B cell (primary cell): ENCODE measurements at regions of chr11 and their contacts with region 1.

Region 1: DNA sequence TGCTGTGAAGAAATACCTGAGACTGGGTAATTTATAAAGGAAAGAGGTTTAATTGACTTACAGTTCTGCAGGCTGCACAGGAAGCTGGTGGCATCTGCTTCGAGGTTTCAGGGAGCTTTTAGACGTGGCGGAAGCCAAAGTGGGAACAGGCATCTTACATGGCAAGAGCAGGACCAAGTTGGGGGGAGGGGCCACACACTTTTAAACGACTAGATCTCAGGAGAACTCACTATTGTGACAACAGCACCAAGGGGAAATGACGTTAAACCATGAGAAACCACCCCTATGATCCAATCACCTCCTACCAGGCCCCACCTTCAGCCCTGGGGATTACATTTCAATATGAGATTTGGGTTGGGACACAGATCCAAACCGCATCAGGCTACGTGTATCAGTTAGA is 11.1 kb upstream of the SCGB1D4 start:
- DNase-seq: no peak
- ATAC-seq: no peak
- H3K4me3 ChIP-seq: no peak overlapping the region
- H3K4me3 Mint-ChIP-seq: no peak overlapping the region
- H3K27ac ChIP-seq: no peak overlapping the region
- H3K27ac Mint-ChIP-seq: no peak overlapping the region
- H3K4me1 ChIP-seq: peaks cover 8 to 12% of the 10 kb centered on the region in 2 donors
- H3K4me1 Mint-ChIP-seq: peaks cover 11% of the 10 kb centered on the region
- H3K27me3 ChIP-seq: peaks cover 0 to 39% (median 10%) of the 10 kb centered on the region in 4 experiments
- H3K27me3 Mint-ChIP-seq: peaks cover 45% of the 10 kb centered on the region
- CTCF ChIP-seq: no peak

Region 2: DNA sequence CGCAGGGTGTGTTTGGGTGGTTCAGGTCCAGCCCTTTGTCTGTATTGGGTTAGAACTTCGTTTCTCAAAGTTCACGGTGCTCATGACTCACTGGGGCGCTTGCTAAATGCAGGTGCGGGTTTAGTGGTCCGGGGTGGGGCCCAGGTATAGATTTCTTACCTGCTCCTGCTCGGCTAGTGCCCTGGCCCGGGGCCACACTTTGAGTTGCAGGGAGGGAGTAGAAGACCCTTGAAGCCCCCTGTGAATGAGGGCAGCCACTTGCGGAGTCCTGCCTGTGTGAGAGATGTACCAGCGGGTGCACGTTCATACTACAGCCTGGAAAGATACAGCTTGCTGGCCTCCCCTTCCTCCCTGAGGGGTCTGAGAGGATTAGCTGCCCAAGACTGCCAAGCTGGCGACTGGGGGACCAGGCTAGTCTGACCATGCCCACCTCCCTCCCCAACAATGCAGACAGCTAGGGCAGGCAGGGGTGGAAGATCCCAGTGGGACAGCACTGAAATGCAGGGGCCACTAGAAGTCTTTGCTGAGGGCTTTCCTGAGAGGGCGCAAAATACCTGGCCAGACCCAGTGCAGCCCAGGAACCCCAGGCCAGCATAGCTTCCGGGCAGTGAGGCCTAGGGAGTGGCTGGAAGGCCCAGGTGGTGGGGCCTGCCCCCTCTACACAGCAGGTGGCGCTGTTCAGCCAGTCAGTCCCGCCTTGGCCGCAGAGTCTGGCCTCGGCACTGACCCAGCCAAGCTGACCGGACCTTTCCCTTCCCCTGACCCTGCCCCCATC is 562.6 kb before region 1 on chr11:
- CTCF ChIA-PET with region 1: interaction called, 4 read pairs
- POLR2A ChIA-PET with region 1: no interaction called
- intact Hi-C with region 1: loop called (anchors 5 kb)
- DNase-seq: peak; percentile 60
- ATAC-seq: peak; percentile 48
- H3K4me3 ChIP-seq: no peak overlapping the region
- H3K4me3 Mint-ChIP-seq: no peak overlapping the region
- H3K27ac ChIP-seq: no peak overlapping the region
- H3K27ac Mint-ChIP-seq: no peak overlapping the region
- H3K4me1 ChIP-seq: peaks cover 4 to 5% of the 10 kb centered on the region in 2 donors
- H3K4me1 Mint-ChIP-seq: peaks cover 2% of the 10 kb centered on the region
- H3K27me3 ChIP-seq: peaks cover 0 to 35% (median 13%) of the 10 kb centered on the region in 4 experiments
- H3K27me3 Mint-ChIP-seq: peaks cover 21% of the 10 kb centered on the region
- CTCF ChIP-seq: peak; percentile 76

Region 3: DNA sequence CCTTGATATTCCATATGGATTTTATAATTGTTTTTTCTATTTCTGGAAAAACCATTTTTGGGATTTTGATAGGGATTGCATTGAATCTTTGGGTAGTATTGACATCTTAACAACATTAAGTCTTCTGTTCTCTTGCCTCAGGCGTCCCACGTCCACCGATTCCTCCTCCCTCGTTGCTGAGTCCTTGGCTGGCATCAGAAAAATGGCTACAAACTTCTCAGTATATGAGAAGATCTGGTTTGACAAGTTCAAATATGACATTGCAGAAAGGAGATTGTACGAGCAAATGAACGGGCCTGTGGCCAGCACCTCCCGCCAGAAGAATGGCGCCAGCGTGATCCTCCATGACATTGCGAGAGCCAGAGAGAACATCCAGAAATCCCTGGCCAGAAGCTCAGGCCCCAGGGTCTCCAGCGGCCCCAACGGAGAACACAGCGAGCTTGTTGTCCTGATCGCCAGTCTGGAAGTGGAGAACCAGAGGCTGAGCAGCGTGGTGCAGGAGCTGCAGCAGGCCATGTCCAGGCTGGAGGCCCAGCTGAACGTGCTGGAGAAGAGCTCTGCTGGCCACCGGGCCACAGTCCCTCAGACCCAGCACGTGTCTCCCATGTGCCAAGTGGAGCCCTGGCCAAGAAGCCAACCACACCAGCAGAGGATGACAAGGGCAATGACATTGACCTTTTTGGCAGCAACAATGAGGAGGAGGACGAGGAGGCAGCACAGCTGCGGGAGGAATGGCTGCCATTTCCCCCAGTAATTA is 140.7 kb before region 1 on chr11:
- CTCF ChIA-PET with region 1: interaction called, 15 read pairs
- POLR2A ChIA-PET with region 1: no interaction called
- intact Hi-C with region 1: no loop called
- DNase-seq: no peak
- ATAC-seq: no peak
- H3K4me3 ChIP-seq: no peak overlapping the region
- H3K4me3 Mint-ChIP-seq: no peak overlapping the region
- H3K27ac ChIP-seq: no peak overlapping the region
- H3K27ac Mint-ChIP-seq: no peak overlapping the region
- H3K4me1 ChIP-seq: peaks cover 0 to 3% of the 10 kb centered on the region in 2 donors
- H3K4me1 Mint-ChIP-seq: peaks cover 5% of the 10 kb centered on the region
- H3K27me3 ChIP-seq: peaks cover 0 to 22% (median 8%) of the 10 kb centered on the region in 4 experiments
- H3K27me3 Mint-ChIP-seq: peaks cover 63% of the 10 kb centered on the region
- CTCF ChIP-seq: no peak

Region 4: DNA sequence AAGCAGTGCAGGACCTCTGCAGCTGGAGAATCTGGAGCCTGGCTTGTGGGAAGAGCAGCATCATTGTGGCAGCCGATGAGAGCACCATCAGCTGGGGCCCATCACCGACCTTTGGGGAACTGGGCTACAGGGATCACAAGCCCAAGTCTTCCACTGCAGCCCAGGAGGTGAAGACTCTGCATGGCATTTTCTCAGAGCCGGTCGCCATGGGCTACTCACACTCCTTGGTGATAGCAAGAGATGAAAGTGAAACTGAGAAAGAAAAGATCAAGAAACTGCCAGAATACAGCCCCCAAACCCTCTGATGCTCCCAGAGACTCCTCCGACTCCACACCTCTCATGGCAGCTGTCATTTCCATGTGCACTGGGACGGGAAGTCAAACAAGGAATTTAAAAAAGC is 62.9 kb after region 1 on chr11:
- CTCF ChIA-PET with region 1: no interaction called
- POLR2A ChIA-PET with region 1: no interaction called
- intact Hi-C with region 1: loop called (anchors 2 kb)
- DNase-seq: no peak
- ATAC-seq: no peak
- H3K4me3 ChIP-seq: no peak overlapping the region
- H3K4me3 Mint-ChIP-seq: no peak overlapping the region
- H3K27ac ChIP-seq: no peak overlapping the region
- H3K27ac Mint-ChIP-seq: no peak overlapping the region
- H3K4me1 ChIP-seq: peaks cover 0 to 2% of the 10 kb centered on the region in 2 donors
- H3K4me1 Mint-ChIP-seq: no peaks in the 10 kb centered on the region
- H3K27me3 ChIP-seq: no peaks in the 10 kb centered on the region
- H3K27me3 Mint-ChIP-seq: no peaks in the 10 kb centered on the region
- CTCF ChIP-seq: no peak

Region 5: GRCh38 chr11:62601394-62602140 is 291.6 kb after region 1 on chr11 and contains the start of gene MTA2:
- CTCF ChIA-PET with region 1: no interaction called
- POLR2A ChIA-PET with region 1: no interaction called
- intact Hi-C with region 1: no loop called
- DNase-seq: peak; percentile 99
- ATAC-seq: peak; percentile 78
- H3K4me3 ChIP-seq: peak within 1 kb of the TSS; percentile 82 to 97 (median 86)
- H3K4me3 Mint-ChIP-seq: peak within 1 kb of the TSS; percentile 97
- H3K27ac ChIP-seq: peak within 1 kb of the TSS; percentile 78 to 90
- H3K27ac Mint-ChIP-seq: peak within 1 kb of the TSS; percentile 96
- H3K4me1 ChIP-seq: peaks cover 24 to 40% of the 10 kb centered on the region in 2 donors
- H3K4me1 Mint-ChIP-seq: peaks cover 46% of the 10 kb centered on the region
- H3K27me3 ChIP-seq: no peaks in the 10 kb centered on the region
- H3K27me3 Mint-ChIP-seq: no peaks in the 10 kb centered on the region
- CTCF ChIP-seq: no peak
- total RNA-seq, gene MTA2: 127 and 139 TPM in 2 replicates